Colonic mucosa (tissue), 4 donors: ENCODE measurements at regions of chr1 and their contacts with region 1.

Region 1: GRCh38 chr1:1130206-1131120 is 14.6 kb upstream of the C1orf159 start:
- DNase-seq: peak; percentile 67
- H3K4me3 ChIP-seq: peak overlapping the region; percentile 9
- H3K27ac ChIP-seq: peak overlapping the region; percentile 92
- H3K4me1 ChIP-seq: peaks cover 9% of the 10 kb centered on the region
- H3K27me3 ChIP-seq: no peaks in the 10 kb centered on the region
- CTCF ChIP-seq: no peak

Region 2: GRCh38 chr1:1164701-1165451 is 34.4 kb after region 1 on chr1:
- intact Hi-C with region 1: loop called (anchors 2 kb)
- DNase-seq: no peak
- H3K4me3 ChIP-seq: peak overlapping the region; percentile 66
- H3K27ac ChIP-seq: peak overlapping the region; percentile 63
- H3K4me1 ChIP-seq: peaks cover 24% of the 10 kb centered on the region
- H3K27me3 ChIP-seq: peaks cover 4% of the 10 kb centered on the region
- CTCF ChIP-seq: no peak

Region 3: DNA sequence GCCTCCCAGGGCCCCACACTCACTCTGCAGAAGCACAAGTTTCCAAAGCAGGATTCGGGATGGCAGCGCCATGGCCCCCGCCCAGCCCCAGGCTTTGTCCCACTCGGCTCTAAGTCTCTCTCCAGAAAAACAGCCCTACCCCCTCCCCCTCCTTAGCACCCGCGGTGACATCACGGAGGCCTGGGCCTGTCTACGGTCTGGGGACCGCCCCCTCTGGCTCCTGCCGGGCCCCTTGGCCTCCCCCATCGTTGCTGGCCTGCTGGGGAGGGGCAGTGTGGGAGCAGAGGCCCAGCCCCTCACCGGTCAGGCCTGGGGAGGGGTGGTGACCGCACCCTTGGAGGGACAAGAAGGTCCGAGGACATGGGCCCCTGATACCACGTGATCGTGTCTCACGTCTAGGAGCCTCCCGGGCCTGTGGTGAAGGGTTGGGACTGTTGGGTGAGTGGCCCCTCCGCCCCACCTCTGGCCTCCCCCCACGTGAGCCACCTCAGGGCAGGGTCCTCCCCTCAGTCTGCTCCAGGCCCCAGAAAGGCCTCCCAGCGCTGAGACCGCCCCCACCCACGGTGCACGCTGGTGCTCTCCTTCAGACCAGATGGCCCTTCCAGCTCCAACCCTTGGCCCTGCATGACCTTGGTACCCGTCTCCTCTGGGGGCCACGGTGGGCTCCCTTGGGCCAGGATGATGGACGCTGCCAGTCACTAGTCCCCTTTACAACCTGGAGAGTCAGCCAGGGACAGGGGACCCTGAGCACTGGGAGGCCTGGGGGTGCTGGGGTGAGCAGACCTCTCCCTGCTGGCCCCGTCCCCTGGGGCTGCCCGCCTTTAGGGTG is 228.2 kb after region 1 on chr1 and contains the start of gene MXRA8:
- intact Hi-C with region 1: no loop called
- DNase-seq: peak; percentile 67
- H3K4me3 ChIP-seq: peak within 1 kb of the TSS; percentile 31
- H3K27ac ChIP-seq: peak within 1 kb of the TSS; percentile 75
- H3K4me1 ChIP-seq: no peaks in the 10 kb centered on the region
- H3K27me3 ChIP-seq: peaks cover 23% of the 10 kb centered on the region
- CTCF ChIP-seq: no peak
- total RNA-seq, gene MXRA8: 5.9 to 14.0 TPM